Mammary epithelial cell (primary cell): ENCODE measurements at regions of chr2 and their contacts with region 1.

Region 1: DNA sequence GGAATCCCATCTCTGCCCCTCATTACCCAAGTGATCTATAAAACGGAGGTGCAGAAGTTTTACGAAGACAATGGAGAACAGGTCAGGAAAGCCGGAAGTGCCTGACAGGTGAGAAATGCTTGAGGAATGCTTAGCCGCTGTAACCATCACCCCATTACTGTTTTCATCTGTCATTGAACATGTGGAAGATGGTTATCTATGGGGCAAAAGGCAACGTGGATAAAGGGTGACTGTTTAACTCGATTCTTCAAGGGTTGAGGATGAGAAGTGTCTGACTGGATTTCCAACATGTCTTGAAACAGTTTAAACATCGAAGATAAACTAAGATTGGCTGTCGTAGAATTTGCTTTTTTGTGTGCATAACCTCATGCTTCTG is 17.3 kb downstream of the HK2 start:
- DNase-seq: peak; percentile 83
- H3K4me3 ChIP-seq: no peak overlapping the region
- H3K27ac ChIP-seq: peak overlapping the region; percentile 62
- H3K4me1 ChIP-seq: peaks cover 67% of the 10 kb centered on the region
- H3K27me3 ChIP-seq: no peaks in the 10 kb centered on the region
- CTCF ChIP-seq: no peak

Region 2: DNA sequence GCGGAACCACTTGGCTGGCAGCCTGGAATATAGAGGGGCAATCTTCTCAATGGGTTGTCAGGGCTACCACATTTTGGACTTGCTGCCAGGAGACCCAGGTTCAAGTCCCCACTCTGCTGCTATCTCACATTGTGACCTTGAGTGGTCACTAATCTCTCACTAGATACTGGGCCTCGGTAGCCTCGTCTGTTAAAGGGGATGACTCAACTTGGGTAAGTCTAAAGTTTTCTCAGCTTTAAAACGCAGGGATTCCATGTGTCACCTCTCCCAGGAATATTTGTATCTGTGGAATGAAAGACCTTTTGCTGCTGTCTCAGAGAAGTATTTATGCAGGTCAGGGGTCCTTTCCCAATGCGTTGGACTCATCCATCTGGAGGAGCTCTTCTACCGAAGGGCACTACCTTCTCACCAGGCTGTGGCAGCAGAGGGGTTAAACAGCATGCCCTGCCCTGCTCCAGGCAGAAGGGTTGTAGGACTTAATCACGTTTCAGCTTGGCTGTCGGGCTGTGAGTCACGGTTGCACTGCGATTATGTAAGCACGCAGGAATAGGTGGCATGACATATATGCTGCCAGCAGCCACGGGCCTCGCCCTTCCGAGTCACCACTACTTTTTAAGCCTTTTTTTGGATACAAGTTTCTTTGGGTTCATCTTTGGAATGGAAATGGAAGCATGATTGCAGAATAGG is 110.6 kb before region 1 on chr2:
- CTCF ChIA-PET with region 1: no interaction called
- dilution Hi-C with region 1: loop called (anchors 5 kb)
- in situ Hi-C with region 1: no loop called
- intact Hi-C with region 1: no loop called
- DNase-seq: peak; percentile 98
- H3K4me3 ChIP-seq: no peak overlapping the region
- H3K27ac ChIP-seq: peak overlapping the region; percentile 90
- H3K4me1 ChIP-seq: peaks cover 31% of the 10 kb centered on the region
- H3K27me3 ChIP-seq: no peaks in the 10 kb centered on the region
- CTCF ChIP-seq: peak in 1 of 2 donors; percentile 29